ENCODE measurements at regions of chr1 and their contacts with region 1.

Region 1: GRCh38 chr1:82775402-82776000 is 974.8 kb downstream of the ADGRL2 start:
- DNase-seq: peak; percentile 85
- ATAC-seq: peak; percentile 71
- H3K4me3 ChIP-seq: no peak overlapping the region
- H3K27ac ChIP-seq: no peak overlapping the region
- H3K4me1 ChIP-seq: no peaks in the 10 kb centered on the region
- H3K27me3 ChIP-seq: peaks cover 31% of the 10 kb centered on the region
- CTCF ChIP-seq: peak; percentile 92

Region 2: DNA sequence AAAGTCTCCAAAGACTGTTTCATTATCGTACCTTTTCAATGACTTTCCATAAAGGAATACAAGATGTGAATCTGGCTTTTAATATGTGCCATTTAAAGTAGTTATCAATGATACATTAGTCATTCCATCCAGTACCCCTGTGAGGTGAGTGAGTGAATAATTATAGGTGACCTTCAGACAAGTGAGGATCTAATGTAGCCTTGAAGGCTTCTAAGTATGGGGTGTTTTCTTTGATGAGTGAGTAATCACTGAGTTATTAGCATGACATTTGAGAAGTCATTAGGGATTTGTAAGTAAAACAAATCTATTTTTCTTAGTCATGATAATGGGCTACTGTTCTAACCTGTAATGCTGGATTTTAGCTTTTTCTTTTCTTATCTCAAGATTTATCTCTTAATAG is 143.3 kb before region 1 on chr1:
- CTCF ChIA-PET with region 1: no interaction called
- POLR2A ChIA-PET with region 1: no interaction called
- intact Hi-C with region 1: no loop called
- DNase-seq: peak; percentile 6
- ATAC-seq: no peak
- H3K4me3 ChIP-seq: no peak overlapping the region
- H3K27ac ChIP-seq: no peak overlapping the region
- H3K4me1 ChIP-seq: no peaks in the 10 kb centered on the region
- H3K27me3 ChIP-seq: no peaks in the 10 kb centered on the region
- CTCF ChIP-seq: no peak

Region 3: GRCh38 chr1:82646336-82646735 is 129.2 kb before region 1 on chr1:
- CTCF ChIA-PET with region 1: no interaction called
- POLR2A ChIA-PET with region 1: no interaction called
- intact Hi-C with region 1: no loop called
- DNase-seq: no peak
- ATAC-seq: no peak
- H3K4me3 ChIP-seq: no peak overlapping the region
- H3K27ac ChIP-seq: no peak overlapping the region
- H3K4me1 ChIP-seq: no peaks in the 10 kb centered on the region
- H3K27me3 ChIP-seq: no peaks in the 10 kb centered on the region
- CTCF ChIP-seq: no peak

Region 4: GRCh38 chr1:83860490-83861221 is 1085.2 kb after region 1 on chr1:
- CTCF ChIA-PET with region 1: no interaction called
- POLR2A ChIA-PET with region 1: no interaction called
- intact Hi-C with region 1: loop called (anchors 1 kb)
- DNase-seq: peak; percentile 75
- ATAC-seq: peak; percentile 97
- H3K4me3 ChIP-seq: peak overlapping the region; percentile 75
- H3K27ac ChIP-seq: no peak overlapping the region
- H3K4me1 ChIP-seq: peaks cover 7% of the 10 kb centered on the region; the same call in 1 of the 2 replicates
- H3K27me3 ChIP-seq: no peaks in the 10 kb centered on the region
- CTCF ChIP-seq: peak; percentile 85